ENCODE measurements at regions of chr1 and their contacts with region 1.

Region 1: GRCh38 chr1:159250638-159251216 is 46.1 kb downstream of the ACKR1 start:
- DNase-seq: peak; percentile 28
- H3K4me3 ChIP-seq: no peak overlapping the region
- H3K27ac ChIP-seq: no peak overlapping the region
- H3K4me1 ChIP-seq: no peaks in the 10 kb centered on the region
- H3K27me3 ChIP-seq: no peaks in the 10 kb centered on the region
- CTCF ChIP-seq: peak; percentile 21 to 38
- POLR2A ChIP-seq: no peak

Region 2: GRCh38 chr1:159315381-159315780 is 64.7 kb after region 1 on chr1:
- CTCF ChIA-PET with region 1: interaction called, 4 read pairs
- POLR2A ChIA-PET with region 1: no interaction called
- dilution Hi-C with region 1: no loop called
- intact Hi-C with region 1: loop called (anchors 10 kb)
- DNase-seq: no peak
- H3K4me3 ChIP-seq: no peak overlapping the region
- H3K27ac ChIP-seq: no peak overlapping the region
- H3K4me1 ChIP-seq: peaks cover 16% of the 10 kb centered on the region
- H3K27me3 ChIP-seq: no peaks in the 10 kb centered on the region
- CTCF ChIP-seq: no peak
- POLR2A ChIP-seq: no peak

Region 3: DNA sequence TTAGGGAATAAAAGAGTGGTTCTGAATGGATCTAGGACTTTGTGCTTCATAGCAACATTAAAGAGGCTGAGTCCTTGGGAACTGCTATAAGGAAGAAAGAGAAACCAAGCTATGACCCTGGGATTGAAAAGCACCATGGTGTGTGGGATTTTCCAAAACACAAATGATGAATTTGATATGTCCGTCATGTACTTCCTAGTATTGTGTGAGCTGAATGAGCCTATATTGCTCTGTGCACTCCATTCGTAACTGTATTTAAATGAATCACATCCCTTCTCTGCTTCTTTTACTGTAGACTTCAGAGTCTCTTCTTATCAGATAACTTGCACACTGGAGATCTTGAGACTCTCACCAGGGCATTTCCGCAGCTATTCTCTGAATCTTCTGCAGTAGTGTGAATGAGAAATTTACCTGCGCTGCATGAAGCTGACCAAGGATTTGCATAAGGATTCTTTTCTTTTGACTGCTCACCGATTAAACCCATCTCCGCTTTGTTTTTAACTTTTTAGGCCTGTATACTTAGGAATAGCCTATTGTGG is 158.2 kb after region 1 on chr1:
- CTCF ChIA-PET with region 1: no interaction called
- POLR2A ChIA-PET with region 1: no interaction called
- dilution Hi-C with region 1: no loop called
- intact Hi-C with region 1: no loop called
- DNase-seq: peak; percentile 98
- H3K4me3 ChIP-seq: peak overlapping the region in 1 of 3 experiments; percentile 39
- H3K27ac ChIP-seq: peak overlapping the region; percentile 90
- H3K4me1 ChIP-seq: peaks cover 10% of the 10 kb centered on the region
- H3K27me3 ChIP-seq: no peaks in the 10 kb centered on the region
- CTCF ChIP-seq: no peak
- POLR2A ChIP-seq: no peak

Region 4: DNA sequence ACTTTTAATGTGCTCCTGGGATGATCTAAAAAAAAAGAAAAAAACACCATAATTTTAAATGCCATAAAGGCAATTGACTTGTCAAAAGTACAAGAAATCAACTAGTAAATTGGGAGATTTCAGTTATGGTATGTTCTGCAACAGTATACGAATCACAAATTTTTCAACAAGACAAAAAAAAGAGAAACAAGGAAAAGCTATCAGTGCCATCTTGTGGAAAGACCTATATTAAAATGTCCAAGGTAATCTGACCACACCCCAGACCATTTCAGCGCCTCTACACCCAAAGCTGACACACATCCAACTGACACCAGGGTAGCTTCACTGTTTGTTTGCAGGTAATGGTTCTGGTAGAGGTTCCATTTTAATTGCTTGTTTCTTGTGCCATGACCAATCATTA is 525.0 kb after region 1 on chr1:
- CTCF ChIA-PET with region 1: interaction called, 12 read pairs
- POLR2A ChIA-PET with region 1: no interaction called
- dilution Hi-C with region 1: no loop called
- intact Hi-C with region 1: loop called (anchors 1 kb)
- DNase-seq: peak; percentile 46
- H3K4me3 ChIP-seq: no peak overlapping the region
- H3K27ac ChIP-seq: peak overlapping the region; percentile 9
- H3K4me1 ChIP-seq: peaks cover 53% of the 10 kb centered on the region
- H3K27me3 ChIP-seq: no peaks in the 10 kb centered on the region
- CTCF ChIP-seq: no peak
- POLR2A ChIP-seq: peak; percentile 49

Region 5: GRCh38 chr1:159790237-159790917 is 539.6 kb after region 1 on chr1:
- CTCF ChIA-PET with region 1: interaction called, 6 read pairs
- POLR2A ChIA-PET with region 1: no interaction called
- dilution Hi-C with region 1: no loop called
- intact Hi-C with region 1: loop called (anchors 1 kb)
- DNase-seq: peak; percentile 57
- H3K4me3 ChIP-seq: no peak overlapping the region
- H3K27ac ChIP-seq: no peak overlapping the region
- H3K4me1 ChIP-seq: peaks cover 16% of the 10 kb centered on the region
- H3K27me3 ChIP-seq: no peaks in the 10 kb centered on the region
- CTCF ChIP-seq: peak; percentile 61 to 65
- POLR2A ChIP-seq: no peak

Measured in endothelial cell of umbilical vein (primary cell).